Activated T-helper 2 cell treated with anti-CD3 and anti-CD28 coated beads, Interferon-gamma antibody, Interleukin-2, Interleukin-4, amounts not matched to agents 10 μg/mL and 5 μg/mL and 100 μg/mL, durations not matched to agents 14 hours and 24 hours and 36 hours (primary cell): ENCODE measurements at regions of chr12 and their contacts with region 1.

Region 1: DNA sequence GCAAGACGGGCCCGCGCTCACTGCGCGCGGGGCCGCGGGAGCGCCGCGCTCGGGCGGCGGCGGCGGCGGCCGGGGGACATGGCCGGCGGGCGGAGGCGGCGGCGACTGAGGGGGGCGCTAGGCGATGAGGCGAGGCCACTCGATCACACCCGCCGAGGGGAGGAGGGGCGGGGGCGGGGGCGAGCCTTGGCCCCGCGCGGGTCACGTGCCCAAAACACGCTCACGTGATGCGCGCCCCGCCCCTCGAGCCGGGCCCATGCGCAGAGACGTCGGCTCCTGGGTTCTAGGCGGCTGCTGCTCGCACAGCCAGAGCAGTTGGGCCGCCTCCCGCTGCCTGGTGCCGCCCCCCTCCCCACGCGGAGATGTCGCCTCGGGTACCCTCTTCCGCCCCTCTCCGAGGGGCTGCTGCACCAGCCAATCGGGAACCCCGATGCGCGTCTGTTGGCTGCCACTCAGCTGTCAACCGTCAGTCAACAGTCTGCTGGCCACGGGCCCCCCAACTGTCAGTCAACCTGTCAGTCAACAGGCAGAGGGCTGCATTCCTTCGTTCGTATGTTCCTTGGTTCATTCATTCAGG is at the start of gene SPPL3:
- DNase-seq: peak; percentile 88
- H3K4me3 Mint-ChIP-seq: peak within 1 kb of the TSS; percentile 97
- H3K27ac Mint-ChIP-seq: peak within 1 kb of the TSS; percentile 86
- H3K4me1 Mint-ChIP-seq: peaks cover 22% of the 10 kb centered on the region
- H3K27me3 Mint-ChIP-seq: no peaks in the 10 kb centered on the region
- total RNA-seq, gene SPPL3: 33.4 and 38.2 TPM in 2 replicates

Region 2: DNA sequence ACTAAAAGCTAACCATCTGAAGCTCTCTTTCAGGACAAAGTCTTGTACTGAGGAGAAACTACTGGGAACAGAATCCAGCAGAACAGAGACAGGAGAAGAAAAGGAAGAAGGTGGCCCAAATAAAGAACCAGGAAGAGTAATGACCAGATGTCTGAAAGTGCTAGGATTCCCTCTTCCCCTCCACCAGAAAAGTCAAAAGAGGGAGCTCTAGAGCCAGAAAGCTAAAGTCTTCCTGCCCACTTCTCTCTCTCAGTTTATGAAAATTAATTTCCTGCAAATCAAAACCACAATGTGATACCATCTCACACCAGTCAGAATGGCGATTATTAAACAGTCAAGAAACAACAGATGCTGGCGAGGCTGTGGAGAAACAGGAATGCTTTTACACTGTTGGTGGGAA is 47.3 kb before region 1 on chr12:
- intact Hi-C with region 1: loop called (anchors 5 kb)
- DNase-seq: no peak
- H3K4me3 Mint-ChIP-seq: no peak overlapping the region
- H3K27ac Mint-ChIP-seq: no peak overlapping the region
- H3K4me1 Mint-ChIP-seq: peaks cover 30% of the 10 kb centered on the region
- H3K27me3 Mint-ChIP-seq: no peaks in the 10 kb centered on the region

Region 3: DNA sequence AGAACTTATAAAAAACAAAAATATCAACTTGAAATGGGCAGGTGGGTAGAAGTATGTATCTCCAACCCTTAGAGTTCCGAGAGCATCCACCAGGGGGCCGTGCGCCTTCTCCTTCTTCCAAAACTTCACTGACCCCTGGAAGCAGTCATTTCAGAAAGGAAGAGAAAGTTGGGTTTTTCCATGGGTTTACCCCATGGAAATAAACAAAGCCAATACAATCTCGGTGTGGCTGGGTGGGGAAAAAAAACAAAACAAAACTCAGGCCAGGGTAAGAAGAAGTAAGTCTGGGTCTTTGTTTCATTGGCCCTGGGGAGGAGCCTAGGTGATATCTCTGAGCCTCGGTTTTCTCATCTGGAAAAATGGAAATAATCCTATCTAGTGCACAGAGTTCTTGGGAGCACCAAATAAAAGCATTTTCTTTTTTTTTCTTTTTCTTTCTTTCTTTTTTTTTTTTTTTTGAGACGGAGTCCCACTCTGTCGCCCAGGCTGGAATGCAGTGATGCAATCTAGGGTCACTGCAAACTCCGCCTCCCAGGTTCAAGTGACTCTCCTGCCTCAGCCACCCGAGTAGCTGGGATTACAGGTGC is 40.5 kb after region 1 on chr12:
- intact Hi-C with region 1: no loop called
- DNase-seq: peak; percentile 46
- H3K4me3 Mint-ChIP-seq: no peak overlapping the region
- H3K27ac Mint-ChIP-seq: peak overlapping the region; percentile 20
- H3K4me1 Mint-ChIP-seq: peaks cover 8% of the 10 kb centered on the region
- H3K27me3 Mint-ChIP-seq: peaks cover 6% of the 10 kb centered on the region